Pancreas (tissue), 10 donors: ENCODE measurements at regions of chr16 and their contacts with region 1.

Region 1: DNA sequence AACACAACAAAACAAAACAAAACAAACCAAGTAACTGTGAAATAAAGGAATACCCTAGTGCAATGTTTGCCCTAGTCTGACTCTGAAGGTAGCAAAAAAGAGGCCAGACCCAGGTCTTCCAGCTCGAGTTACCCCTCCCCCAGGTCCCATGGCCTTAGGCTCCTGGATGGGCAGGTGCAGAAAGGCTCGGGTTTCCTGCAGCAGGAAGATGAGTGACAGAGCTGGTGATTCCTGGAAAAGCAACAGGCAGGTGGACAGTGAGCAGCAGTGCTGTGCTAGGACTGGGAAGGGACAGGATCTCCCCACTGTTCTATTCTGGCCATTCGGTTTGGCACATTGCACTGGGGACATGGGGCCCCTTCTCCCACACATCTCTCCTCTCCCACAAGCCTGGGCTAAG is 42.9 kb upstream of the MRTFB start:
- DNase-seq: no peak
- ATAC-seq: no peak
- H3K4me3 ChIP-seq: no peak overlapping the region
- H3K27ac ChIP-seq: no peak overlapping the region
- H3K4me1 ChIP-seq: no peaks in the 10 kb centered on the region
- H3K27me3 ChIP-seq: no peaks in the 10 kb centered on the region
- CTCF ChIP-seq: no peak

Region 2: GRCh38 chr16:14219983-14220382 is 191.8 kb after region 1 on chr16:
- intact Hi-C with region 1: loop called in 1 of 3 experiments (anchors 5 kb)
- DNase-seq: no peak
- ATAC-seq: no peak
- H3K4me3 ChIP-seq: no peak overlapping the region
- H3K27ac ChIP-seq: no peak overlapping the region
- H3K4me1 ChIP-seq: no peaks in the 10 kb centered on the region
- H3K27me3 ChIP-seq: no peaks in the 10 kb centered on the region
- CTCF ChIP-seq: no peak

Region 3: GRCh38 chr16:14285513-14286385 is 257.5 kb after region 1 on chr16:
- intact Hi-C with region 1: no loop called
- DNase-seq: peak; percentile 86 to 100 (median 96)
- ATAC-seq: peak; percentile 89 to 94 (median 90)
- H3K4me3 ChIP-seq: peak overlapping the region; percentile 69 to 85 (median 75)
- H3K27ac ChIP-seq: peak overlapping the region; percentile 52 to 86 (median 74)
- H3K4me1 ChIP-seq: no peaks in the 10 kb centered on the region
- H3K27me3 ChIP-seq: no peaks in the 10 kb centered on the region
- CTCF ChIP-seq: no peak